ENCODE measurements at regions of chr9 and their contacts with region 1.

Region 1: DNA sequence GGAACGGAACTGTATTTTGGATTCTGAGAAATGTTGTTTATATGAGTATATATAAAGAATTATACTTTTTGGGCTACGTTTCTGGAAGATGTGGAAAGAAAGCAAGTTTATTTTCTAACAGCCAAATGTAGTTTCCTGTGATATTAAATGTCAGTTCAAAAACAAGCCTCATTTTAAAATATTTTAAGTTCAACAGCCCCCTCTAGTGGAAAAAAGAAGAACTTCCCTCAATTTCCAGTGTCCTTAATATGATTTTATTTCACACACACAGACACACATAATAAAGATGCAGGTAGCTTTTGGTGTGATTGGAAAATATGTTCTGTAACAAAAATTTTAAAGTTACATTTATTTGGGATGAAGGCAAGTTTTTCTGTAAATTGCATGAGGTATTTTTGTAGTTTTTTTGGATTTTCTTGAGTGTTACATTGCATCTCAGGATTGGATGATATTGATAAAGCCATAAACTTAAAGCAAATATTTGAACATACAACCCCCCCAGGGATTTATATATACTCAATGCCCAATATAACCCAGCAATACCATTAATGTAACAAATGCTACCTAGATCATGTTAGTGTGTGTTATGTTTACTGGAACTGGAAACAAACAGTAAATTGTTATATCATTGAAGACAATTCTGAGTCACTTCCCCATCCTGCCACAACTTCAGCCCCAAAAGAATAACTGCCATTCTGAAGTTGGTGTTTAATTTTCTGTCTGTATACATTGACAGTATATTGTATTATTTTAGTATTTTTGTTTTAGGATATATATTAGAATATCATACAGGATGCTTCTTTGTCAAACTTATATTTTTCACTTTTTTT is 54.0 kb downstream of the CCDC171 start:
- DNase-seq: no peak
- H3K4me3 Mint-ChIP-seq: no peak overlapping the region
- H3K27ac Mint-ChIP-seq: no peak overlapping the region
- H3K4me1 Mint-ChIP-seq: peaks cover 7% of the 10 kb centered on the region
- H3K27me3 Mint-ChIP-seq: no peaks in the 10 kb centered on the region

Region 2: DNA sequence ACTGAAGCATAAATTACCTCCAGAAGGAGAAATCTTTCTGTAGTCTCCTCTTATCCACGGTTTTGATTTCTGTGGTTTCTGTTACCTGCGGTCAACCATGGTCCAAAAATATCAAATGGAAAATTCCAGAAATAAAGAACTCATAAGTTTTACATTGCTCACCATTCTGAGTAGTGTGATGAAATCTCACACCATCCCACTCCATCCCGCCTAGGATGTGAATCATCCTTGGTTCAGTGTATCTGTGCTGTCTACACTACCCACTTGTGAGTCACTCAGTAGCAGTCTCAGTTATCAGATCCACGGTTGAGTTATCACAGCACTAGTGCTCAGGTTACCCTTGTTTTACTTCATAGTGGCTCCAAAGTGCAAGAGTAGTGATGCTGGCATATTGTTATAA is 1664.2 kb before region 1 on chr9:
- intact Hi-C with region 1: no loop called
- DNase-seq: no peak
- H3K4me3 Mint-ChIP-seq: no peak overlapping the region
- H3K27ac Mint-ChIP-seq: no peak overlapping the region
- H3K4me1 Mint-ChIP-seq: no peaks in the 10 kb centered on the region
- H3K27me3 Mint-ChIP-seq: peaks cover 2% of the 10 kb centered on the region

Region 3: DNA sequence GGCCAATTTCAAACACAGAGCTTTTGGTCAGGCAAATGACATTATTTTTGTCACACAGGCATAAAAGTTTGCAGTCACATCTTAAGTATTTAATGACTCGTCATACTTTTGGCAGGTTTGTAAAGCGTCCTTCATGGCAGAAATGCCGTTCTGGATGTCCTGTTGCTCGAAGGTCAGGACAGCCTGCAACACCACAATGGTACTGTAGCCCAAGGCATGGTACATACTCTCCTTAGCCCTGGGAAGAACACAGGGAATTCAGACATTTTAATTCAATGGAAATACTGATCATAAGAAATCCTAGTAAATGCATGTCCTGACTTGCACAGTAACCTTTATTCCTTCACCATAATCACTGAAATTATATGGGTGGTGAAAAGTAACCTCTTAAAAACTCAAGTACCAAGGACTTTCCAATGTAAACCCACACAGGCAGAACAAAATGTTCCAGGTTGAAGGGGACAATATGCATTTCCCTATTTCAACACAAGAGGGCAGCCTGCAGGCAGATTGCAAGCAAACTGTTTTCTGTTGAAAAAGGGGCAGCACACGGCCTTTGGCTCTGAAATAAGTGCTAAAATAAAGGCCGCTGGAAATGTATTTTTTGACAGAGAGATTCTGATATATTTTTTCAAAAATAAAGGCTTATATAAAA is 395.6 kb before region 1 on chr9:
- intact Hi-C with region 1: loop called (anchors 1 kb)
- DNase-seq: peak; percentile 47
- H3K4me3 Mint-ChIP-seq: no peak overlapping the region
- H3K27ac Mint-ChIP-seq: no peak overlapping the region
- H3K4me1 Mint-ChIP-seq: peaks cover 39% of the 10 kb centered on the region
- H3K27me3 Mint-ChIP-seq: no peaks in the 10 kb centered on the region

Region 4: GRCh38 chr9:15485836-15486666 is 120.8 kb before region 1 on chr9:
- intact Hi-C with region 1: loop called (anchors 1 kb)
- DNase-seq: no peak
- H3K4me3 Mint-ChIP-seq: no peak overlapping the region
- H3K27ac Mint-ChIP-seq: peak overlapping the region; percentile 22
- H3K4me1 Mint-ChIP-seq: peaks cover 27% of the 10 kb centered on the region
- H3K27me3 Mint-ChIP-seq: no peaks in the 10 kb centered on the region

Region 5: GRCh38 chr9:15510789-15511575 is 95.9 kb before region 1 on chr9 and contains the start of gene PSIP1:
- intact Hi-C with region 1: loop called (anchors 2 kb)
- DNase-seq: peak; percentile 84
- H3K4me3 Mint-ChIP-seq: peak within 1 kb of the TSS; percentile 96
- H3K27ac Mint-ChIP-seq: peak within 1 kb of the TSS; percentile 100
- H3K4me1 Mint-ChIP-seq: peaks cover 52% of the 10 kb centered on the region
- H3K27me3 Mint-ChIP-seq: peaks cover 4% of the 10 kb centered on the region
- total RNA-seq, gene PSIP1: 90.6 and 95.3 TPM in 2 replicates

Region 6: DNA sequence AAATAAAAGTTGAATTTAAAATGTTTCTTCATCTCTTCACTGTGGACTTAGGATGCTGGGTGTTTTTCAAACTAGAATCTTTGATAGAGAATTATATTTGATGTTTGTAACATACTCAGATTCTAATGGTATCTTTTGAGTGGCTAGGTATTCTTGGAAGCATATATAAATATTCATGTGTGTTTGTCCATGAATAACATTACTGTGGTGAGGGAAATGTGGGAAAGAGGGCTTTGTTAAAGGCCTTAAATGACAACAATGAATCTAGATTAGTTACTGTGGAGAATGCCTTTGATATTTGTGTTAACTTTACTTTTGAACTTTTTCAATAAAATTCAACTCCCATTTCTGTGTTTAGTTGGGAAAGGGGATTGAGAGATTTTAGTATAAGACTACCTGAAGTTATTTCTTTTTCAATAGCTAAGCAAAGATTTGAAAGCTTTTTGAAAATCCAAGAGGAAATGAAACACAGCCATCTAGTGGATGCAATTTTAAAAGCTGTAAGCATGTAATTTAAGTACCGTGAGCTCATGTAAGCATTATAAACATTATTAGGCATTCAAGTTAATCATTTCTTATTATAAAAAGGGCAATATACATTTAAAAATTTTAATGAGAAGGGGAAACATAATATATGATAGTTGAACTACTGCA is 15.6 kb after region 1 on chr9:
- intact Hi-C with region 1: no loop called
- DNase-seq: no peak
- H3K4me3 Mint-ChIP-seq: no peak overlapping the region
- H3K27ac Mint-ChIP-seq: no peak overlapping the region
- H3K4me1 Mint-ChIP-seq: no peaks in the 10 kb centered on the region
- H3K27me3 Mint-ChIP-seq: peaks cover 2% of the 10 kb centered on the region

Region 7: GRCh38 chr9:15642369-15642962 is 35.6 kb after region 1 on chr9:
- intact Hi-C with region 1: loop called (anchors 1 kb)
- DNase-seq: no peak
- H3K4me3 Mint-ChIP-seq: no peak overlapping the region
- H3K27ac Mint-ChIP-seq: no peak overlapping the region
- H3K4me1 Mint-ChIP-seq: no peaks in the 10 kb centered on the region
- H3K27me3 Mint-ChIP-seq: no peaks in the 10 kb centered on the region

Measured in activated T-helper 1 cell treated with anti-CD3 and anti-CD28 coated beads, Interleukin-12 subunit alpha, Interleukin-12 subunit beta, Interleukin-2, Interleukin-4 antibody, amounts not matched to agents 30 ng/mL and 10 ng/mL and 1 ng/mL, durations not matched to agents 14 hours and 24 hours and 36 hours (primary cell).